Activated naive CD8-positive, alpha-beta T cell treated with anti-CD3 and anti-CD28 coated beads, Interleukin-2, amount 10 ng/mL, durations not matched to agents 7 days and 5 days (primary cell): ENCODE measurements at regions of chr3 and their contacts with region 1.

Region 1: DNA sequence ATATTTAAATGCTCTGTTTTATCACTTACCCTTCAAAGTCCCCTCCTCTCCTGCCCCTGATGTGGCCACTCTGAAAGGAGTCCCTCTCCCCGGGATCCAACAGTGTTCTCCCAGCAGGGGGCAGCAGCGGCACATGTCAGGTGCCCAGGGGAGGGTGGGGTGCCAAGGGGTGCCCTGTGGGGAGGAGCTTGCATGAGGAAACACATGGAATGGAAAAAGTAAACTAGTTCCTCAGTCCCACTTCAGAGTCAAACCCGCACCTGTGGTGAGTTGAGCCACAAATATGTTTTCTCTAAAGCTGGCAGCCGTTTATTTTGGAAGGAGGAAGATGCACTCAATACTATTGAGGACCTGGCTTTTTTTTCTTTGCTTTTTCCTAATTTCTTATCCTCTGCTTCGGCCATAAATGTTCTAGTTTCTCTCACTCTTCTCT is 30.1 kb upstream of the NRROS start:
- DNase-seq: peak; percentile 95
- ATAC-seq: peak; percentile 85
- H3K4me3 Mint-ChIP-seq: peak overlapping the region; percentile 64
- H3K27ac Mint-ChIP-seq: peak overlapping the region; percentile 46
- H3K4me1 Mint-ChIP-seq: peaks cover 42% of the 10 kb centered on the region
- H3K27me3 Mint-ChIP-seq: no peaks in the 10 kb centered on the region

Region 2: DNA sequence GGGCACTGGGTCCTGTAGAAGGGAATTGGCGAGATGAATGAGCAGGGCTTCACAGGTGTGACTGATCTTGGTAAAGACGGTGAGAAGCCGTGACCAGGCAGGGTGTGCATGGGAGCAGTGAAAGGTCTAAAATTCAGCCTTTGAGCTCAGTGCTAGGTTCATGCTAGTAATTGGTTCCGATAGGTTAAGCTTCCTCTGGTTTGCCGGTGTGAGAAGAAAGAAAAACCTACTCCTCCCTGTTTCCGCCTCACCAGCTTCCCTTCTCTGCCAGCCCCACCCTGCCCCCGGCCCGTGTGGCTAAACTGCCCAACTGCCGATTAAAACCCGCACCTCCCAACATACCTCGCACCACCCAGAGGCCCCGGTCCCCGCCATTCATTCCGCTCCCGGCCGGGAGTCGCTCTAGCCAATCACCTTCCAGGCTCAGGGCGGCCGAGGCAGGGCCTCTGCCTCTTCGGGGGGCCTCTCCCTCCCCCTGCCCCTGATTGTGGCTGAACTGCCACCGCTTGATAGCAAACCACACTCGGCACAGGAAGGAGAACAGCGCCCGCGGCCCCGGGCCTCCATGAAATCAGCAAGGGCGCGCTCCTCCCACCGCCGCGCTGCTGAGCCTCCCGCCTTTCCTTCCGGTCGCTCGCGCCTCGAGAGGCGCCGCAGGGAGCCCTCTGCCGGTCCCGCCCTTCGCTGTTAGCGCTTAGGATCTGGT is 22.8 kb after region 1 on chr3:
- POLR2A ChIA-PET with region 1: interaction called, 23 read pairs
- DNase-seq: peak; percentile 94
- ATAC-seq: peak; percentile 86
- H3K4me3 Mint-ChIP-seq: peak overlapping the region; percentile 77
- H3K27ac Mint-ChIP-seq: peak overlapping the region; percentile 95
- H3K4me1 Mint-ChIP-seq: peaks cover 38% of the 10 kb centered on the region
- H3K27me3 Mint-ChIP-seq: no peaks in the 10 kb centered on the region

Region 3: GRCh38 chr3:196684548-196685407 is 75.4 kb after region 1 on chr3:
- POLR2A ChIA-PET with region 1: interaction called, 17 read pairs
- DNase-seq: peak; percentile 60
- ATAC-seq: peak; percentile 94
- H3K4me3 Mint-ChIP-seq: peak overlapping the region; percentile 18
- H3K27ac Mint-ChIP-seq: peak overlapping the region; percentile 4
- H3K4me1 Mint-ChIP-seq: peaks cover 19% of the 10 kb centered on the region
- H3K27me3 Mint-ChIP-seq: peaks cover 8% of the 10 kb centered on the region